ENCODE measurements at regions of chr2 and their contacts with region 1.

Region 1: GRCh38 chr2:80141007-80141726 is 163.4 kb downstream of the LRRTM1 start:
- DNase-seq: no peak
- H3K4me3 ChIP-seq: no peak overlapping the region
- CTCF ChIP-seq: no peak
- POLR2A ChIP-seq: no peak

Region 2: DNA sequence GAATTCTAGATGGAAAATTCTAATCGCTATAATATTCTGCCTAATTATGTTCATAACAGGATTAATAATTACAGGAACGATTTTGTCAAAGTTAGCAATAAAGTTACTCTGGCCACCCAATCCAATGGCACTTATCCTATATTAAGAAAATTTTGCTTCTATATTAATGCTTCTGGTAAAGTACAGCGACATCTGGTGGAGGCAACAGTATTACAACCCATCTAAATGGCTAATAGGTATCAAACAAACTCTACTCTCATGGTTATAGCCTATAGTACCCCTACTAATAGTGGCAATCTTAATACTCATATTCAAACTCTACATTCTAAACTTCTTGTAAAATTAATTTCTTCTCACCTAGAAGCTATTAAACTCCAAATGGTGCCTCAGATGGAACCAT is 1248.0 kb after region 1 on chr2:
- intact Hi-C with region 1: loop called (anchors 5 kb)
- DNase-seq: no peak
- H3K4me3 ChIP-seq: no peak overlapping the region
- CTCF ChIP-seq: no peak
- POLR2A ChIP-seq: no peak